ENCODE measurements at regions of chr10 and their contacts with region 1.

Region 1: GRCh38 chr10:106513352-106513771 is 651.1 kb downstream of the SORCS1 start:
- DNase-seq: peak in 1 of 10 donors; percentile 26
- H3K4me3 ChIP-seq: peak overlapping the region in 41 of 59 donors; percentile 3 to 54 (median 28)
- H3K27ac ChIP-seq: peak overlapping the region in 58 of 59 donors; percentile 44 to 94 (median 82)
- H3K27me3 ChIP-seq: no peaks in the 10 kb centered on the region
- CTCF ChIP-seq: no peak

Region 2: GRCh38 chr10:106378251-106378650 is 135.1 kb before region 1 on chr10:
- intact Hi-C with region 1: no loop called
- DNase-seq: no peak
- H3K4me3 ChIP-seq: no peak overlapping the region
- H3K27ac ChIP-seq: no peak overlapping the region
- H3K27me3 ChIP-seq: no peaks in the 10 kb centered on the region
- CTCF ChIP-seq: no peak

Region 3: GRCh38 chr10:106401161-106401560 is 112.2 kb before region 1 on chr10:
- intact Hi-C with region 1: loop called in 1 of 2 experiments (anchors 5 kb)
- DNase-seq: no peak
- H3K4me3 ChIP-seq: no peak overlapping the region
- H3K27ac ChIP-seq: no peak overlapping the region
- H3K27me3 ChIP-seq: no peaks in the 10 kb centered on the region
- CTCF ChIP-seq: peak in 55 of 56 donors; percentile 30 to 73 (median 55)